ENCODE measurements at regions of chr17 and their contacts with region 1.

Region 1: GRCh38 chr17:42997984-42998938 is at the start of gene RPL27:
- DNase-seq: peak; percentile 100
- ATAC-seq: peak; percentile 91
- H3K4me3 ChIP-seq: peak within 1 kb of the TSS; percentile 81 to 95 (median 92)
- H3K27ac ChIP-seq: peak within 1 kb of the TSS; percentile 94
- H3K4me1 ChIP-seq: peaks cover 48% of the 10 kb centered on the region
- H3K27me3 ChIP-seq: no peaks in the 10 kb centered on the region; a peak in 1 of 5 replicates
- CTCF ChIP-seq: peak; percentile 90
- EP300 ChIP-seq: peak; percentile 77 to 81; a peak in 3 of 4 replicates
- POLR2A ChIP-seq: peak; percentile 93 to 98
- RAD21 ChIP-seq: peak; percentile 85
- total RNA-seq, gene RPL27: 1,585 and 1,854 TPM in 2 replicates

Region 2: DNA sequence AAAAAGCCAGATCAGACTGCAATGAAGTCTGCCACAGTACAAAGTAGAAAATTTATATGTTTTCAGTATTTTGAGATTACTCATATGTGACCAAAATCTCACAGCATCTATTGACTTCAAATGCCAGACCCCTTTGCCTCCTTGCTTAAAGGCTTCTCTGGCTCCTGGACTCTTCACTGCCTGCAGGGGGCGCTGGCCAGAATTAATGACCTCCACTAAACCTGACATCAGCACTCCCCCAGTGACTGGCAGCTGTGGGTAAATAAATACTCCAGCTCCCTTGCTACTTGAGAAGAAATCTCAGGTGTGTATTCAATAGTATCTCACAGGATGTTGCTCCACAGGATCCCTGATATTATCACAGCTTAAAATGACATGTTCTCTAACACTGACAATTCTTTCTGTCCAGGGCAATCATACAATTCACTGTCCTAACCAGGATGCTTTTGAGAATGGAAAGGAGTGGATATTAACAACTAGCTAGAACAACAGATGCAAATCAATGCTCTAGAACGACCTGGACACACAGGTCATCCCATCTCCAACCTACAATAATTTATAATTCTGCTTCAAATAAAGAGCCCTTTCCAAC is 178.2 kb before region 1 on chr17:
- CTCF ChIA-PET with region 1: no interaction called
- POLR2A ChIA-PET with region 1: interaction called, 17 read pairs
- in situ Hi-C with region 1: no loop called
- intact Hi-C with region 1: no loop called
- DNase-seq: peak; percentile 88
- ATAC-seq: peak; percentile 67
- H3K4me3 ChIP-seq: no peak overlapping the region
- H3K27ac ChIP-seq: no peak overlapping the region
- H3K4me1 ChIP-seq: peaks cover 35% of the 10 kb centered on the region
- H3K27me3 ChIP-seq: peaks cover 0 to 7% of the 10 kb centered on the region in 2 experiments; a peak in 1 of 5 replicates
- CTCF ChIP-seq: peak; percentile 81
- EP300 ChIP-seq: no peak
- POLR2A ChIP-seq: no peak
- RAD21 ChIP-seq: peak; percentile 60

Region 3: GRCh38 chr17:42872251-42872965 is 125.9 kb before region 1 on chr17:
- CTCF ChIA-PET with region 1: no interaction called
- POLR2A ChIA-PET with region 1: no interaction called
- in situ Hi-C with region 1: no loop called
- intact Hi-C with region 1: no loop called
- DNase-seq: no peak
- ATAC-seq: peak; percentile 50
- H3K4me3 ChIP-seq: no peak overlapping the region
- H3K27ac ChIP-seq: peak overlapping the region; percentile 5
- H3K4me1 ChIP-seq: peaks cover 58% of the 10 kb centered on the region
- H3K27me3 ChIP-seq: no peaks in the 10 kb centered on the region
- CTCF ChIP-seq: no peak
- EP300 ChIP-seq: peak in 1 of 2 experiments; percentile 28; a peak in 1 of 4 replicates
- POLR2A ChIP-seq: no peak
- RAD21 ChIP-seq: no peak

Region 4: DNA sequence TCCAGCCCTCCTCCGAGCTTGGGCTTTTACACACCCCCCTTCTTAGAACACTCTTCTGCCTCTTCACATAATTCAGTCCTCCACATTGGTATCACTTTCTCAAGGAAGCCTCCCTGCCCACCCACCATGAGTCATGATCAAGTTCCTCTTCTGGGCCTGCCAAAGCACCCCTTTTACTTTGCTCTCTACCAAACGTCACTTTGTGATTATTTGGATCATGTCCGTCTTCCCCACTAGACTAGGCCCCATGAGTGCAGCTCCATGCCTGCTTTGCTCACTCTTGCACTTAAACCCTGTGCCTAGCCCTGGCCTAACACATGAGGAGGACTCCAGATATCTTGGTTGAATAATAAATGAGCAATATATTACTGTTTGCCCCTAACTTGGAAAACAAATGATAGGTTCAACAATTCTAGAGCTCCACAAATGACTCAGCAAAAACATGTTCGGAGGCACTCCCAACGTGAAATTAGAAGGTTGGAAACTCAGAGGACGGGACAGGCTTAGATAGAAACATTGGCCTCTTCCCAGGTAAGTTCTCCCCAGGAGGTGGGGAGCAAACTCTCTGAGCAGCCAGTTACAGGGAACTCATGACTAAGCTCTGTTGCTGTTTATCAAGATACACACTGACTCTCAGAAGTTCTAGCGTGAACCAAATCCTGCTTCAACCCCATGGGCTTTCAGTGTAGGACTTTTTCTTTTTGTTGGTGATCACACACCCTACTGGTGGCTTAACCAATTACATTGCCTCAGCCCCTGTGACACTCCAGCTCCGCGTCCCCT is 69.4 kb before region 1 on chr17:
- CTCF ChIA-PET with region 1: interaction called, 3 read pairs
- POLR2A ChIA-PET with region 1: interaction called, 15 read pairs
- in situ Hi-C with region 1: no loop called
- intact Hi-C with region 1: loop called (anchors 2 kb)
- DNase-seq: peak; percentile 92
- ATAC-seq: peak; percentile 96
- H3K4me3 ChIP-seq: peak overlapping the region; percentile 18 to 55 (median 38); a peak in 4 of 6 replicates
- H3K27ac ChIP-seq: peak overlapping the region; percentile 83
- H3K4me1 ChIP-seq: peaks cover 38% of the 10 kb centered on the region
- H3K27me3 ChIP-seq: no peaks in the 10 kb centered on the region; a peak in 1 of 5 replicates
- CTCF ChIP-seq: peak; percentile 90
- EP300 ChIP-seq: peak in 1 of 2 experiments; percentile 35; a peak in 1 of 4 replicates
- POLR2A ChIP-seq: no peak
- RAD21 ChIP-seq: peak; percentile 94

Region 5: GRCh38 chr17:43015579-43015978 is 17.3 kb after region 1 on chr17:
- CTCF ChIA-PET with region 1: no interaction called
- POLR2A ChIA-PET with region 1: interaction called, 162 read pairs
- in situ Hi-C with region 1: no loop called
- intact Hi-C with region 1: no loop called
- DNase-seq: no peak
- ATAC-seq: no peak
- H3K4me3 ChIP-seq: no peak overlapping the region
- H3K27ac ChIP-seq: no peak overlapping the region
- H3K4me1 ChIP-seq: peaks cover 70% of the 10 kb centered on the region
- H3K27me3 ChIP-seq: no peaks in the 10 kb centered on the region
- CTCF ChIP-seq: no peak
- EP300 ChIP-seq: no peak
- POLR2A ChIP-seq: no peak; a peak in 1 of 4 replicates
- RAD21 ChIP-seq: no peak

Region 6: DNA sequence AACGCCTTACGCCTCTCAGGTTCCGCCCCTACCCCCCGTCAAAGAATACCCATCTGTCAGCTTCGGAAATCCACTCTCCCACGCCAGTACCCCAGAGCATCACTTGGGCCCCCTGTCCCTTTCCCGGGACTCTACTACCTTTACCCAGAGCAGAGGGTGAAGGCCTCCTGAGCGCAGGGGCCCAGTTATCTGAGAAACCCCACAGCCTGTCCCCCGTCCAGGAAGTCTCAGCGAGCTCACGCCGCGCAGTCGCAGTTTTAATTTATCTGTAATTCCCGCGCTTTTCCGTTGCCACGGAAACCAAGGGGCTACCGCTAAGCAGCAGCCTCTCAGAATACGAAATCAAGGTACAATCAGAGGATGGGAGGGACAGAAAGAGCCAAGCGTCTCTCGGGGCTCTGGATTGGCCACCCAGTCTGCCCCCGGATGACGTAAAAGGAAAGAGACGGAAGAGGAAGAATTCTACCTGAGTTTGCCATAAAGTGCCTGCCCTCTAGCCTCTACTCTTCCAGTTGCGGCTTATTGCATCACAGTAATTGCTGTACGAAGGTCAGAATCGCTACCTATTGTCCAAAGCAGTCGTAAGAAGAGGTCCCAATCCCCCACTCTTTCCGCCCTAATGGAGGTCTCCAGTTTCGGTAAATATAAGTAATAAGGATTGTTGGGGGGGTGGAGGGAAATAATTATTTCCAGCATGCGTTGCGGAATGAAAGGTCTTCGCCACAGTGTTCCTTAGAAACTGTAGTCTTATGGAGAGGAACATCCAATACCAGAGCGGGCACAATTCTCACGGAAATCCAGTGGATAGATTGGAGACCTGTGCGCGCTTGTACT is 127.1 kb after region 1 on chr17 and contains the start of gene BRCA1:
- CTCF ChIA-PET with region 1: no interaction called
- POLR2A ChIA-PET with region 1: interaction called, 22 read pairs
- in situ Hi-C with region 1: no loop called
- intact Hi-C with region 1: no loop called
- DNase-seq: peak; percentile 100
- ATAC-seq: peak; percentile 91
- H3K4me3 ChIP-seq: peak within 1 kb of the TSS; percentile 87 to 94 (median 91)
- H3K27ac ChIP-seq: peak within 1 kb of the TSS; percentile 95
- H3K4me1 ChIP-seq: peaks cover 53% of the 10 kb centered on the region
- H3K27me3 ChIP-seq: no peaks in the 10 kb centered on the region; a peak in 1 of 5 replicates
- CTCF ChIP-seq: peak; percentile 23; the same call in 1 of the 2 replicates
- EP300 ChIP-seq: peak; percentile 45 to 73; a peak in 2 of 4 replicates
- POLR2A ChIP-seq: peak; percentile 76 to 97
- RAD21 ChIP-seq: peak; percentile 55; the same call in 1 of the 2 replicates
- total RNA-seq, gene BRCA1: 37.5 and 56.0 TPM in 2 replicates

Region 7: GRCh38 chr17:43316522-43317142 is 318.4 kb after region 1 on chr17:
- CTCF ChIA-PET with region 1: no interaction called
- POLR2A ChIA-PET with region 1: interaction called, 32 read pairs
- in situ Hi-C with region 1: no loop called
- intact Hi-C with region 1: no loop called
- DNase-seq: no peak
- ATAC-seq: no peak
- H3K4me3 ChIP-seq: no peak overlapping the region; a peak in 1 of 6 replicates
- H3K27ac ChIP-seq: no peak overlapping the region
- H3K4me1 ChIP-seq: peaks cover 20% of the 10 kb centered on the region
- H3K27me3 ChIP-seq: 0 out of 5 replicates have a peak, but pooled peaks cover 0 to 2% of the 10 kb centered on the region in 2 experiments
- CTCF ChIP-seq: no peak
- EP300 ChIP-seq: no peak
- POLR2A ChIP-seq: no peak
- RAD21 ChIP-seq: no peak

Measured in HepG2 (cell line).